Colonic mucosa (tissue), 4 donors: ENCODE measurements at regions of chr6 and their contacts with region 1.

Region 1: DNA sequence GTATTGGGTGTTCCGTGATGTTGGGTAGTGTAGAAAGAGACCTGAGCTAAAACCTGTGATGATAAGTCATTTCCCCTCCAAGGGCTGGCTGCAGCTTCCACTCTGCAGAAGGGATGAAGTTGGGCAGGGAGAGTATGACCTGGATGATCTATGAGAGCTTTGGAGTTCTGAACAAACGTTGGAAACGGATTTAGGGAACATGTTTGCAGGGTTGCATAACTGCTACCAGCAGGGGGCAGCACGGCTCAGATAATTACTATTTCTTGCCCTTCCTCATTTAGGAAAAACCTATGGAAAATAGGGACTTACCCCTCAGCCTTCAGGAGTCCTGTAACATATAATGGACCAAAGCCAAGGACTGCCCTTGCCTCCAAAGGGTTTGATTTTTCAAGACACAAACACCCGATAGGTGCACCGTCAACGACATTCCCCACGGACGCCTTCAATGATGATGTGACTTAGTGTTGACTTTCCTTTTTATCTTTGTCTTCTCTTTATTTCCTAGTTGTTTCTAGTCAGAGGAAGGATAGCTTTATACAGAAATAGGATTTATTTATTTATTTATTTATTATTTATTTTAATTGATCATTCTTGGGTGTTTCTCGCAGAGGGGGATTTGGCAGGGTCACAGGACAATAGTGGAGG is 164.9 kb upstream of the SASH1 start:
- DNase-seq: peak; percentile 69
- H3K4me3 ChIP-seq: no peak overlapping the region
- H3K27ac ChIP-seq: no peak overlapping the region
- H3K4me1 ChIP-seq: no peaks in the 10 kb centered on the region
- H3K27me3 ChIP-seq: no peaks in the 10 kb centered on the region
- CTCF ChIP-seq: peak; percentile 71

Region 2: DNA sequence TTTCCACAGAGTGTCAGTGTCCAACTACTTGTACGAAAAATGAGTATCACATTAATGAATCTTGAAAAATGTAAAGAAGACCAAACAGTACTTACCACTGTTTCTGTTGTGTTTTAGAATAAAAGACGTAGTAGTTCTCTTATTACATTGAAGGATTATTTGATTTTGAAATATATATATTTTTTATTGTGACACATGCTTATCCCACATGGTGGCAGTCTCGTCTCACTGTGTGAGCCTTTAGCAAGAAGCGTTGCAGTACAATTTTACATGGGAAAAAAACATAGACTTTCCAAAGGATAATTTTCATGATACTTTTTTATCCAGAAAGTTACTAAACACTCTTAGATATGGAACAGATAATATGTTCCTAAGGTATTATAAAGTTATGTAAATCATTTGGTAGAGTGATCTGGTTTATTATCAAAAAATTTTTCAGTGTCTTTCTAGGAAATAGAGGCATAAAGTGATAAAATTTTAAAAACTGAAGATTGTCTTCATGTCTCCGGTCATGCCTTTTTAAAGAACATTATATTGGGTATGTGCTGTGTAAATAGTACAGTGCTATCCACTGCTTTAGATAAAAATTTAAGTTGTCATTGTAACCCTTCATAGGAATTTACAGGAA is 786.7 kb before region 1 on chr6:
- intact Hi-C with region 1: loop called (anchors 10 kb)
- DNase-seq: no peak
- H3K4me3 ChIP-seq: no peak overlapping the region
- H3K27ac ChIP-seq: no peak overlapping the region
- H3K4me1 ChIP-seq: no peaks in the 10 kb centered on the region
- H3K27me3 ChIP-seq: no peaks in the 10 kb centered on the region
- CTCF ChIP-seq: no peak

Region 3: GRCh38 chr6:148247386-148248063 is 69.8 kb after region 1 on chr6:
- intact Hi-C with region 1: loop called (anchors 2 kb)
- DNase-seq: no peak
- H3K4me3 ChIP-seq: no peak overlapping the region
- H3K27ac ChIP-seq: no peak overlapping the region
- H3K4me1 ChIP-seq: no peaks in the 10 kb centered on the region
- H3K27me3 ChIP-seq: no peaks in the 10 kb centered on the region
- CTCF ChIP-seq: no peak

Region 4: GRCh38 chr6:148464319-148465010 is 286.8 kb after region 1 on chr6:
- intact Hi-C with region 1: loop called (anchors 2 kb)
- DNase-seq: peak; percentile 70
- H3K4me3 ChIP-seq: no peak overlapping the region
- H3K27ac ChIP-seq: no peak overlapping the region
- H3K4me1 ChIP-seq: no peaks in the 10 kb centered on the region
- H3K27me3 ChIP-seq: no peaks in the 10 kb centered on the region
- CTCF ChIP-seq: peak; percentile 95